ENCODE measurements at regions of chr20 and their contacts with region 1.

Region 1: DNA sequence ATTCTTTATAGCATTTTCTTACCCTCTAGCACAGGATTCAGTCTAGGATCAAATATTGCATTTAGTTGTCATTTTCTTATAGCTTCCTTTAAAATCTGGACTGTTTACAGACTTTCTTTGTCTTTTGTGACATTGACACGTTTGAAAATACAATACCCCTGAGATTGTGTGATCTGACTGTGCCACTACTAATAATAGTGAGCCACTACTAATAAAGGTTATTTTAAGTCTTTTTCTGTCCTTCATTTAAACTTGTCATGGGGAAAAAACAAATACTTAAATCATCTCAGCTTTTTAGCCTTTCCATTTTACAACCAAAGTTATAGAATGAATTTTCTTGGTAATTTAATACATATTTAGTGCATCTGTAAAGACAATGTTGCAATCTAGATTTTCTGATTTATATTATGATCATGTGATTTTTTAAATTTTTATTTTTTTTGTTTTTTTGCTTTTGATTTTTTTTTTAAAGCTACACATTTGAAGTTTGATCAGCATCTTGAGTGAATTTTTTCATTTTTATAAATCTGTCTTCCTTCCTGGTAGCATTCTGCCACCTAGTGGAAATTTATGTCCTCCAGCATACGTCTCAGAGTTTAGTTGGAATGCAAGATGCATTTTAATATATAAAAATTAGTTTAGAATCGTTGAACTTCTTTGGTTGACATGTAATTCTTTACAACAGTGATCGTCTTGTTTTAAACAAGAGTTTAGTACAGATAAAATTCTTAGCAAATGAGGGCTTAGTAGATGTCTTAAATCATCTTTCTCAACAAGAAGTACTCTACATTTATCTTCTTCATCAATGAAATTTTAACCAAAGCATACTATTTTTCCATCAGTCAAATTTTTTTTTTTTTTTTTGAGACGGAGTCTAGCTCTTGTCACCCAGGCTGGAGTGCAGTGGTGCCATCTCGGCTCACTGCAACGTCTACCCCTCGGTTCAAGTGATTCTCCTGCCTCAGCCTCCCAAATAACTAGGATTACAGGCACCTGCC is 119.4 kb downstream of the NCOA3 start:
- DNase-seq: peak; percentile 82
- H3K4me3 ChIP-seq: no peak overlapping the region
- H3K27ac ChIP-seq: peak overlapping the region; percentile 19; the same call in 1 of the 2 replicates
- H3K4me1 ChIP-seq: peaks cover 7% of the 10 kb centered on the region; the same call in 1 of the 2 replicates
- H3K27me3 ChIP-seq: no peaks in the 10 kb centered on the region

Region 2: GRCh38 chr20:46757754-46758678 is 863.1 kb before region 1 on chr20:
- in situ Hi-C with region 1: loop called (anchors 25 kb)
- DNase-seq: peak; percentile 69
- H3K4me3 ChIP-seq: no peak overlapping the region
- H3K27ac ChIP-seq: no peak overlapping the region
- H3K4me1 ChIP-seq: 0 out of 2 replicates have a peak, but pooled peaks cover 3% of the 10 kb centered on the region
- H3K27me3 ChIP-seq: 0 out of 2 replicates have a peak, but pooled peaks cover 3% of the 10 kb centered on the region

Region 3: GRCh38 chr20:47272893-47273590 is 348.1 kb before region 1 on chr20:
- in situ Hi-C with region 1: loop called (anchors 10 kb)
- DNase-seq: peak; percentile 78
- H3K4me3 ChIP-seq: no peak overlapping the region
- H3K27ac ChIP-seq: peak overlapping the region; percentile 87
- H3K4me1 ChIP-seq: peaks cover 68% of the 10 kb centered on the region
- H3K27me3 ChIP-seq: no peaks in the 10 kb centered on the region

Measured in GM23248 (cell line).